ENCODE measurements at regions of chr2 and their contacts with region 1.

Region 1: DNA sequence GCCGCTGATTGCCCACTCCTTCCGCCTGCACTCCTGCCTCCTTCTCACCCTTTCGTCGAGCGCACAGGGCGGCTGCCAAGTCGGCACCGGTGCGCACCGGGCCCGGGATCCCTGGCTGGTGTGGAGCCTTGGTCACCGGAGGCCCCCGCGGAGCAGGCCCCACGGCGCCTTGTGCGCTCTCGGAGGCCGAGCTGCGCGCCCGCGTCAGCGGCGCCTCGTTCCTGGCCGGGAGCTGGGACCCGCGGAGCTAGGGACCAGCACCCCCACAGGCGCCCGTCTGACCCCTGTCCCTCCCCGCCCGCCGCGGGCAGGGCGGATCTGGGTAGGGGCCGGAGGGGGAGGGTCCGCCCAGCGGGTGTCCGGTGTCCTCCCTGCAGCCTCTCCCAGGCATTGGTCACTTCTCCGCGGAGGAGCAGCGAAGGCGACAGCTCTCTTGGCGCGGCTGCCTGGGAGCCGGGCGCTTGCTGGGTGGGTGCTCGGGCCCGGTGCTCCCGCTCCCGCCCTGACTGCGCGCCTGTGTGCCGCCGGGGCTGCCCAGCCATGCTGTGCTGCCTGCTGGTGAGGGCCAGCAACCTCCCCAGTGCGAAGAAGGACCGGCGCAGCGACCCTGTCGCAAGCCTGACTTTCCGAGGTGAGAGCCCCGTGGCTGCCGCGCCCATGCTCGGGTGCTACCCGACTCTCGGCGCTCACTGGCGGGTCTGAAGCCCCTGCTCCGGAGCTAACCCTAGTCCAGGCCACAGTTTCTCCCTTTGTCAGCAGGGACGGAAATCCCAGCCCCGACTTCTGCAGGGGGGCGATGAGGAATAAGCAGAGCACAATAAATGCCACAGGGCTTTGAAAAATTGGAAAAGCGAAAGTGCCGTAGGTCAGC is 13.2 kb downstream of the DYSF start:
- DNase-seq: peak; percentile 41 to 46
- ATAC-seq: peak; percentile 55 to 78
- H3K4me3 ChIP-seq: peak overlapping the region; percentile 57
- H3K27ac ChIP-seq: peak overlapping the region; percentile 30 to 79; a peak in 5 of 6 replicates
- H3K4me1 ChIP-seq: no peaks in the 10 kb centered on the region
- CTCF ChIP-seq: no peak
- EP300 ChIP-seq: no peak
- POLR2A ChIP-seq: no peak
- RAD21 ChIP-seq: no peak

Region 2: GRCh38 chr2:71276311-71277146 is 190.0 kb before region 1 on chr2:
- CTCF ChIA-PET with region 1: no interaction called
- POLR2A ChIA-PET with region 1: no interaction called
- DNase-seq: peak; percentile 89 to 93
- ATAC-seq: peak; percentile 96 to 98
- H3K4me3 ChIP-seq: peak overlapping the region; percentile 50
- H3K27ac ChIP-seq: peak overlapping the region; percentile 64 to 83
- H3K4me1 ChIP-seq: peaks cover 5% of the 10 kb centered on the region; the same call in 1 of the 3 replicates
- CTCF ChIP-seq: no peak
- EP300 ChIP-seq: no peak
- POLR2A ChIP-seq: peak; percentile 75
- RAD21 ChIP-seq: no peak

Region 3: GRCh38 chr2:71452565-71452964 is 14.0 kb before region 1 on chr2:
- CTCF ChIA-PET with region 1: interaction called, 95 read pairs
- POLR2A ChIA-PET with region 1: no interaction called
- DNase-seq: peak; percentile 40 to 46
- ATAC-seq: peak; percentile 62 to 70; a peak in 5 of 6 replicates
- H3K4me3 ChIP-seq: no peak overlapping the region
- H3K27ac ChIP-seq: no peak overlapping the region
- H3K4me1 ChIP-seq: peaks cover 29% of the 10 kb centered on the region
- CTCF ChIP-seq: no peak
- EP300 ChIP-seq: no peak
- POLR2A ChIP-seq: no peak
- RAD21 ChIP-seq: no peak